HepG2 (cell line): ENCODE measurements at regions of chr3 and their contacts with region 1.

Region 1: GRCh38 chr3:189961525-189962161 is 159.1 kb downstream of the P3H2 start:
- DNase-seq: peak; percentile 67
- ATAC-seq: peak; percentile 78
- H3K4me3 ChIP-seq: no peak overlapping the region; a peak in 1 of 6 replicates
- H3K27ac ChIP-seq: no peak overlapping the region
- H3K4me1 ChIP-seq: no peaks in the 10 kb centered on the region
- H3K27me3 ChIP-seq: no peaks in the 10 kb centered on the region
- CTCF ChIP-seq: peak; percentile 90
- EP300 ChIP-seq: peak in 1 of 2 experiments; percentile 76; a peak in 2 of 4 replicates
- POLR2A ChIP-seq: no peak
- RAD21 ChIP-seq: peak; percentile 57; the same call in 1 of the 2 replicates

Region 2: GRCh38 chr3:190038050-190038933 is 76.6 kb after region 1 on chr3:
- CTCF ChIA-PET with region 1: interaction called, 3 read pairs
- POLR2A ChIA-PET with region 1: no interaction called
- in situ Hi-C with region 1: no loop called
- intact Hi-C with region 1: loop called (anchors 10 kb)
- DNase-seq: no peak
- ATAC-seq: no peak
- H3K4me3 ChIP-seq: no peak overlapping the region
- H3K27ac ChIP-seq: no peak overlapping the region
- H3K4me1 ChIP-seq: no peaks in the 10 kb centered on the region
- H3K27me3 ChIP-seq: no peaks in the 10 kb centered on the region
- CTCF ChIP-seq: no peak
- EP300 ChIP-seq: no peak
- POLR2A ChIP-seq: no peak
- RAD21 ChIP-seq: no peak

Region 3: DNA sequence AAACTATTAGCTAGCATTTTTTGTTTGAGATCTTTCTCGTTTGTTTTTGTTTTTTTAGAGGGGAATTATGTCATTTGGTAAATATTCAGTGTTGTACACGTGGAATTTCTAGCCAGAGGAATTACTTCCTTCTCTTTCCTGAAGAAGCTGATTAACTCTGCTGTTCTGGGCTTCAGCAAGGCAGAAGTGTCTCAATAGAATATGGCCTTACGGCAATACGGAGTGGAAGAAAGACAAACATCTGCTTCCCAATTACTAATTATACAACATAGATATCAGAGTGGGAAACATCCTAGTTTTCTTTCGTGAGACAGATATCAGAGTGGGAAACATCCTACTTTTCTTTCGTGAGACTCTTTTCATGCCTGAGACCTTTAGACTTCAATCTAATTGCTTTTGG is 147.2 kb after region 1 on chr3:
- CTCF ChIA-PET with region 1: no interaction called
- POLR2A ChIA-PET with region 1: no interaction called
- in situ Hi-C with region 1: no loop called
- intact Hi-C with region 1: no loop called
- DNase-seq: no peak
- ATAC-seq: no peak
- H3K4me3 ChIP-seq: no peak overlapping the region
- H3K27ac ChIP-seq: no peak overlapping the region
- H3K4me1 ChIP-seq: no peaks in the 10 kb centered on the region
- H3K27me3 ChIP-seq: no peaks in the 10 kb centered on the region
- CTCF ChIP-seq: no peak
- EP300 ChIP-seq: no peak
- POLR2A ChIP-seq: no peak
- RAD21 ChIP-seq: no peak

Region 4: DNA sequence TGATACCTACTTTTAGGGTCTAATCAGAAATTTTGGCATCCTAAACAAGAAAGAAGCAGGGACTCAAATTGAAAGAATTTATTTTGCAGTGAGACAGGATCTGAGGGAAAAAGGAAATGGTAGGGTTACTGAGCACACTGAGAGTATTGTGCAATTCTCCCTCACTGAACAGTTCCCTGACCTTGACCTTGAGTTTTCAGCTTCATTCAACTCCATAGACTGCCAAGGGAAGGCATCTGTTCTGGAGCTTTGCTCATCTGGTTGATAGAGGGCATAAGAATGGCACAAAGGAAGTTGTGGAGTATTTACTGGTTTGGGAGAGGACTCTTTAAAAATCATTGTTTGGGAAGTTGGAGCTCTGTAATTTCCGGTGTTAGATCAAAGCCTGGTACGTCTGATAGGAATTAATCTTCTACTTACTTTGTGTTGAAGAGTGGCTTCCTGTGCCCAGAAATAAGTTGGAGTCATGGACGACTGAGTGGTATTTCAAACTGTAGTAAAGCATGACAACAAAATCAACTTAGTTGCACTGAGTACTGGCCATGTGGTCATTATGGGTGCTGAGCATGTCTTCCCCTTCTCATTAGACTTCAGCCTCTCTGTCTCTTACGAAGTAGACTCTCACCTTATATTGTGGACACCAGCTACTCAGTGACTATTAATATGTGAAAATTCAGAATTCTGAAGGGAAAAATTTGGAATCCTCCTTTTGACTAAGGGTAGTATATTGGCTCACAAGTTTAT is 319.8 kb after region 1 on chr3:
- CTCF ChIA-PET with region 1: no interaction called
- POLR2A ChIA-PET with region 1: no interaction called
- in situ Hi-C with region 1: no loop called
- intact Hi-C with region 1: loop called (anchors 10 kb)
- DNase-seq: peak; percentile 76
- ATAC-seq: peak; percentile 86
- H3K4me3 ChIP-seq: no peak overlapping the region
- H3K27ac ChIP-seq: no peak overlapping the region
- H3K4me1 ChIP-seq: peaks cover 17% of the 10 kb centered on the region
- H3K27me3 ChIP-seq: no peaks in the 10 kb centered on the region; a peak in 1 of 5 replicates
- CTCF ChIP-seq: no peak
- EP300 ChIP-seq: 0 out of 4 replicates have a peak, but pooled peaks of 1 of the 2 experiments have one; percentile 27
- POLR2A ChIP-seq: no peak
- RAD21 ChIP-seq: no peak

Region 5: GRCh38 chr3:190424478-190425439 is 463.1 kb after region 1 on chr3:
- CTCF ChIA-PET with region 1: interaction called, 3 read pairs
- POLR2A ChIA-PET with region 1: no interaction called
- in situ Hi-C with region 1: loop called (anchors 25 kb)
- intact Hi-C with region 1: loop called (anchors 2 kb)
- DNase-seq: peak; percentile 77
- ATAC-seq: peak; percentile 96
- H3K4me3 ChIP-seq: no peak overlapping the region
- H3K27ac ChIP-seq: no peak overlapping the region
- H3K4me1 ChIP-seq: no peaks in the 10 kb centered on the region
- H3K27me3 ChIP-seq: no peaks in the 10 kb centered on the region
- CTCF ChIP-seq: peak; percentile 68
- EP300 ChIP-seq: peak in 1 of 2 experiments; percentile 27; a peak in 1 of 4 replicates
- POLR2A ChIP-seq: no peak
- RAD21 ChIP-seq: peak; percentile 59

Region 6: DNA sequence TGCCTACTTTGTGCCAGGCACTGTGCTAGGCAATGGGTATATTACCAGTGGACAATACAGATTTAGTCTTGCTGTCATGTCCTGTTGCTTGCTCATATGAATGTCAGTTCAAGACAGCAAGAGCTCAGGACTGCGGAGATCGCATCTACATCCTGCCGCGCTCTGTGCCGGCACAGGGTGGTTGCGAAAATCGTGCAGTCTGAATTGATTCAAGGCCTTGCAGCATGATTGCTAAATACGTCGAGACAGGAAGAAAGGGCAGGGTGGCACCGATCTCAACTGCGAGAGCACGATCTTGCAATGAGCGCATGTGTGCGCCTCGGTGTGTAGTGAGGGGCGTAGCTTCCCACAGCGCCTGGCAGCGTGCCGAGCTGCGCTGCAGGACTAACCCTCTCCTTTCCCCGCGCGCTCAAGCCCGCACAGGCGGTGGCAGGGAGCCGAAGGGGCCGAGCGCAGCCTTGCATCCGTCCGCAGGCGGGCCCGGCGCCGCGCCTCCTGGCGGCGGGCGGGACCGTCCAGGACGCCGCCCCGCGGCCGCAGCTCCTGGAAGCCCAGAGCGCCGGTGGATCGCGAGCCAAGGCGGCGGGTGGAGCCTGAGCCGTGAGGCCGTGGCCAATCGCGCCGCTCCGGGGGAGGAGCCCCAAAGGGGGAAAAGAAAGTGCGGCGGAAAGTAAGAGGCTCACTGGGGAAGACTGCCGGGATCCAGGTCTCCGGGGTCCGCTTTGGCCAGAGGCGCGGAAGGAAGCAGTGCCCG is 551.9 kb after region 1 on chr3 and contains the start of gene IL1RAP:
- CTCF ChIA-PET with region 1: no interaction called
- POLR2A ChIA-PET with region 1: no interaction called
- in situ Hi-C with region 1: no loop called
- intact Hi-C with region 1: loop called (anchors 5 kb)
- DNase-seq: peak; percentile 89
- ATAC-seq: peak; percentile 96
- H3K4me3 ChIP-seq: peak within 1 kb of the TSS; percentile 69 to 94 (median 88)
- H3K27ac ChIP-seq: peak within 1 kb of the TSS; percentile 75
- H3K4me1 ChIP-seq: peaks cover 52% of the 10 kb centered on the region
- H3K27me3 ChIP-seq: peaks cover 0 to 4% of the 10 kb centered on the region in 2 experiments; a peak in 1 of 5 replicates
- CTCF ChIP-seq: peak; percentile 76
- EP300 ChIP-seq: no peak; a peak in 1 of 4 replicates
- POLR2A ChIP-seq: peak; percentile 68 to 74; a peak in 3 of 4 replicates
- RAD21 ChIP-seq: peak; percentile 92
- total RNA-seq, gene IL1RAP: 11.6 and 18.3 TPM in 2 replicates